Activated CD4-positive, alpha-beta memory T cell treated with anti-CD3 and anti-CD28 coated beads for 36 hours (primary cell): ENCODE measurements at regions of chr6 and their contacts with region 1.

Region 1: GRCh38 chr6:13574149-13574570 is 241 bp upstream of the SIRT5 start:
- DNase-seq: peak; percentile 94
- H3K4me3 Mint-ChIP-seq: peak overlapping the region; percentile 98
- H3K27ac Mint-ChIP-seq: peak overlapping the region; percentile 100
- H3K4me1 Mint-ChIP-seq: peaks cover 13% of the 10 kb centered on the region
- H3K27me3 Mint-ChIP-seq: no peaks in the 10 kb centered on the region

Region 2: DNA sequence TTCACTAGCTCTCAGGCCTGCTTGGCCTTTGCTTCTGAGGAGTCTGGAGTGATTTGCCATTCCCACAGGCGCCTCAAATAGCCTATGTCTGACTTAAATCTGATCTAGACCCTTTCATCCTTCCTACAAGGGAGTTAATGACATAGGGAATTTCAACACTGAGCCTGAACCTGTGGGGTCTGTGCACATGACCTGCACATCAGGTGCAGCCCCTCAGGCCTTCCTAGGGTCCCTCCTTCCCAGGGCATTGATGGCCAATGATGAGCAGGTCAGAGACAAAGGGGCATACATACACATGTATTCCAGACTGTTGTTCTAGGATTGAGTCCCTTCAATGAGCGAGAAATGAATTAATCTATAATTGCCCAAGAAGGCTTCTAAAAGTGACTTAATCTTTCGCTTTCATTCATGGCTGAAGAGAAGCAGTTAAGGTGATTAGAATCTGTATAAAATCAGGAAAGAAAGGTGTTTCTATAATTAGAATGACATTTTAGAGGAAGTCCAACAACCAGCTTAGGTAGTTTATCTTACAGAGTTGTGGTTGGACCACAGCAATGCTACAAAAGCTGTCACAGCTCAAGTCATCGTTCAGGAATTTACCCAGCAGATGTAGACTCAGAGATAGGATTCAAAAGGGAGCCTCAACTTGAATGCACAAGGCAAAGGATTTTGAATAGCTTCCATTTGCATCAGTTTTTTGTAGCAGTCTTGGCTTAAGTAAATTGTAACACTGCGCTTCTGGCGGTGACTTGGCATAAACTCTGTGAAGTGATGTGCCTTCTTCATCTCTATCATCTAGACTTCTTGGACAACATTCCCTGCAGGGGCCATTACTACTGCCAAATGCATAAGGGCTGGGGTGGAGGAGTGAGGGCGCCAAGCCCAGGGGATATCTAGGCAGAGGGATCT is 218.9 kb before region 1 on chr6:
- CTCF ChIA-PET with region 1: interaction called, 16 read pairs
- POLR2A ChIA-PET with region 1: interaction called, 12 read pairs
- intact Hi-C with region 1: loop called (anchors 1 kb)
- DNase-seq: peak; percentile 52
- H3K4me3 Mint-ChIP-seq: peak overlapping the region; percentile 56
- H3K27ac Mint-ChIP-seq: peak overlapping the region; percentile 97
- H3K4me1 Mint-ChIP-seq: peaks cover 45% of the 10 kb centered on the region
- H3K27me3 Mint-ChIP-seq: no peaks in the 10 kb centered on the region

Region 3: GRCh38 chr6:13454286-13455221 is 119.6 kb before region 1 on chr6:
- CTCF ChIA-PET with region 1: interaction called, 11 read pairs
- POLR2A ChIA-PET with region 1: no interaction called
- intact Hi-C with region 1: loop called (anchors 1 kb)
- DNase-seq: peak; percentile 86
- H3K4me3 Mint-ChIP-seq: peak overlapping the region; percentile 28
- H3K27ac Mint-ChIP-seq: peak overlapping the region; percentile 89
- H3K4me1 Mint-ChIP-seq: peaks cover 43% of the 10 kb centered on the region
- H3K27me3 Mint-ChIP-seq: no peaks in the 10 kb centered on the region

Region 4: GRCh38 chr6:13593720-13594119 is 19.6 kb after region 1 on chr6:
- CTCF ChIA-PET with region 1: interaction called, 11 read pairs
- POLR2A ChIA-PET with region 1: no interaction called
- intact Hi-C with region 1: no loop called
- DNase-seq: no peak
- H3K4me3 Mint-ChIP-seq: no peak overlapping the region
- H3K27ac Mint-ChIP-seq: no peak overlapping the region
- H3K4me1 Mint-ChIP-seq: no peaks in the 10 kb centered on the region
- H3K27me3 Mint-ChIP-seq: no peaks in the 10 kb centered on the region

Region 5: DNA sequence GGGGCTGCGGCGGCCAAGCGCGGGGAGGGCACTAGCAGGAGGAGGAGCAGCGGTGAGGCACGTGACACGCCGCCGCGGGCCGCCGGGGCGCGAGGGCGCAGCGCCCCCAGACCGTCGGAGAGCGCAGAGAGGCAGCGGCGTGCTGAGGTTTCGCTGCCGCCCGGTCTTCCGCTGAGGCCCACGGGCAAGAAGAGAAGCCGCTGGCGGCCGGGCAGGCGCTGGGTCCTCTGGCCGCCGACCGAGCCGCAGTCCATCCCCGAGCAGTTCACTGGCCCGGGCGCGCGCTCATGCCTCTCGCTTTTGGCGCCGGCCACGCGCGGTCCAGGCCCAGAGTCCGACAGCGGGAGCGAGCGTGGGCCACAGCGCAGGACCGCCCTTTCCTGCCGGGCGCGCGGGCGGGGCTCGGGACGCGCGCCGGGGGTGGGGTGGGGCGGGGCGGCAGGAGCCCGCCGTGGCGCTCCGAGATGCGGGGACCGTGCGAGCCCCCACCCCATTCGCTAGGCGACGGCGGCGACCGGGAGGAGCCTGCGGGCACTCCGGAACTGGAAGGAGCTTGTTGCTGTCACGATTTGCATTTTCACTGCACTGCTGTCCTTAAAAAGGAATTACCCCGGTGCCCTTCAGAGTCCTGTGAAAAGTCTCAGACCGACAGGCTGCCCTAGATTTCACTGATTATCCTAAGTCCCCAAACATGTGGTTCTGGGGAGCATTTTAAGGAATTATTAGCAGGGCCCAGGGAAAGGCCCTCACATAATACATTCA is 240.2 kb after region 1 on chr6 and contains the start of gene MCUR1:
- CTCF ChIA-PET with region 1: interaction called, 6 read pairs
- POLR2A ChIA-PET with region 1: interaction called, 3 read pairs
- intact Hi-C with region 1: loop called (anchors 1 kb)
- DNase-seq: peak; percentile 90
- H3K4me3 Mint-ChIP-seq: peak within 1 kb of the TSS; percentile 87
- H3K27ac Mint-ChIP-seq: peak within 1 kb of the TSS; percentile 84
- H3K4me1 Mint-ChIP-seq: peaks cover 28% of the 10 kb centered on the region
- H3K27me3 Mint-ChIP-seq: no peaks in the 10 kb centered on the region
- total RNA-seq, gene MCUR1: 36.6 to 38.8 TPM